Posterior cingulate gyrus (tissue), 11 donors: ENCODE measurements at regions of chr2 and their contacts with region 1.

Region 1: DNA sequence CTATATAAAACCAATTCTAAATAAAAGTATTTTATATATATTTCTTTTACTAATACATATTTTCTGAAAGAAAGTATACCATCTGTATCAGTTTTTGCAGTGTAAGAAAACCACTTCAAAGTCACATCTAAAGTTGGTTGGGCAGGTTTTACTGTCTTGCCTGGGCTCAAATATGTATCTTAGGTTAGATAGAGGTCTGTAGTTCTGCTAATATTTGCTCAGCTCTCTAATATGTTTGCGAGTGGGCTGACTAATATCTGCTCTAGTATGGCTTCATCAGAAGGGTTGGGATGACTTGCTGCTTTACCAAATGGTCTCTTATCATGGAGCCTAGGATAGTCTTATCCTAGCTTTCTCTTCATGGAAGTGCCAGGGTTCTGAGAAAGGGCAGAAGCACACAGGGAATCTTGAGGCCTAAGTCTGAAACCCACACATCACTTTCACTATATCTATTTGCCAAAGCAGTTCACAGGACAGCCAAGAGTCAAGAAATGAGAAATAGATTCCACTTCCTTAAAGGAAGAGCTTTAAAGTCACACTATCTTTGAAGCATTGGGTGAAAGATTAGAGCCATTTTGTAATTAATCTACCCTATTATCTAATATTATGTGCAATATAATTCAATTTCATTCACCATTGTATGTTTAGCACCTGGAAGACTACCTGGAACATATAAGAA is 610.0 kb downstream of the KCNJ3 start:
- DNase-seq: no peak

Region 2: DNA sequence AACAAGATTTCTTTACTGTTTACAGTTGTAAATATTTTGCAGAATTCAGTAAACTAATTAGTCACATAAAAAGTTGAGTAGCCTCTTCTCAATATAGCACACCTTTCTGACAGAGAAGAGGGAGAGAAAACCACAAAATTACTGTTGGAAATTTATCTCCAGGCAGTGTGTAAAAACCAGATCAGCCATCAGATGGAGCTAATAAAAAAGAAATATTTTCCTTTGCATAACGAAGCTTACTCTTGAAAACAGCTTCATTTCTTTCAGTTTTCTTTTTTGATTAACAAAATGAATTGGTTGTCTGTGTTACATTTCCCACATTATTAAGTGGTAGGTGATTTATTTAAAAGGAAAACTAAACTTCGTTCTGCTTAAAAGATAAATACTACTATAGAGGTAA is 869.3 kb before region 1 on chr2:
- intact Hi-C with region 1: loop called (anchors 10 kb)
- DNase-seq: no peak

Region 3: GRCh38 chr2:154623819-154624218 is 684.7 kb before region 1 on chr2:
- intact Hi-C with region 1: loop called (anchors 2 kb)
- DNase-seq: peak in 7 of 10 donors; percentile 39 to 88 (median 55)